ENCODE measurements at regions of chr22 and their contacts with region 1.

Region 1: GRCh38 chr22:38681784-38682335 is at the start of gene TOMM22:
- DNase-seq: peak; percentile 83
- H3K4me3 Mint-ChIP-seq: peak within 1 kb of the TSS; percentile 92
- H3K27ac Mint-ChIP-seq: peak within 1 kb of the TSS; percentile 99
- H3K4me1 Mint-ChIP-seq: peaks cover 5% of the 10 kb centered on the region
- H3K27me3 Mint-ChIP-seq: no peaks in the 10 kb centered on the region
- CTCF ChIP-seq: peak; percentile 39
- total RNA-seq, gene TOMM22: 60.4 and 71.5 TPM in 2 replicates

Region 2: DNA sequence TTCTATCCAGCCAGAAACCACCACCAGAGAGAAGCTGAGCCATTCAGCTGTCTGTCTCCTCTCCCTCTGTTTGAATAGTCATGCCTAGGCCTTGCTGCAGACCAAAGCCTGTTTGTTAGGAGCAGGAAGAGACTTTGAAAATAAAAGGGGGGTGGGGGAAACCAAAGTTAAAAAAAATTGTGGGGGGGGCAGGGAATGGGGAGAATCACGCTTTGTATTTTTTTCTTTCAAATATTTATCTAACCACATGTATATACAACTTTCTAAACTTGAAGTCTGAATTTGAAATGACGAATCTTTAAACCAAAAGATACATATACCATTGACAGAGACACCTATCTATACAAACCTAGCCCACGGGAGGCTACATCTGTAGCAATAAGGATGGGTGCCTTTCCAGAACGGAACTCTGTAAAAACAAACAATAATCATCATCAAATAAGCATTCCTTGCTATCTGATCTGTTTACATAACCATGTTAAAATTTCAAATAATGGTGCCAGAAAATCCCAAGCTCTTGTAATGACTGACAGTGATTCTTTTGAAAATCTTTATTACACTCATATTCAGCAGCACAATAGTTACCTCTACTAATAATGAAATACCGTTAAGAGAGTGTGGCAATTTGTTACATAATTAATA is 190.0 kb before region 1 on chr22:
- CTCF ChIA-PET with region 1: no interaction called
- POLR2A ChIA-PET with region 1: no interaction called
- intact Hi-C with region 1: no loop called
- DNase-seq: no peak
- H3K4me3 Mint-ChIP-seq: no peak overlapping the region
- H3K27ac Mint-ChIP-seq: no peak overlapping the region
- H3K4me1 Mint-ChIP-seq: peaks cover 5% of the 10 kb centered on the region
- H3K27me3 Mint-ChIP-seq: no peaks in the 10 kb centered on the region
- CTCF ChIP-seq: no peak

Region 3: GRCh38 chr22:38656256-38657044 is 25.4 kb before region 1 on chr22 and contains the starts of genes CBY1 and FAM227A:
- CTCF ChIA-PET with region 1: interaction called, 6 read pairs
- POLR2A ChIA-PET with region 1: interaction called, 38 read pairs
- intact Hi-C with region 1: no loop called
- DNase-seq: peak; percentile 89
- H3K4me3 Mint-ChIP-seq: peak within 1 kb of the TSS; percentile 93
- H3K27ac Mint-ChIP-seq: peak within 1 kb of the TSS; percentile 100
- H3K4me1 Mint-ChIP-seq: no peaks in the 10 kb centered on the region
- H3K27me3 Mint-ChIP-seq: no peaks in the 10 kb centered on the region
- CTCF ChIP-seq: no peak
- total RNA-seq, gene CBY1: 40.6 and 42.1 TPM in 2 replicates
- total RNA-seq, gene FAM227A: 2.3 and 2.6 TPM in 2 replicates

Region 4: DNA sequence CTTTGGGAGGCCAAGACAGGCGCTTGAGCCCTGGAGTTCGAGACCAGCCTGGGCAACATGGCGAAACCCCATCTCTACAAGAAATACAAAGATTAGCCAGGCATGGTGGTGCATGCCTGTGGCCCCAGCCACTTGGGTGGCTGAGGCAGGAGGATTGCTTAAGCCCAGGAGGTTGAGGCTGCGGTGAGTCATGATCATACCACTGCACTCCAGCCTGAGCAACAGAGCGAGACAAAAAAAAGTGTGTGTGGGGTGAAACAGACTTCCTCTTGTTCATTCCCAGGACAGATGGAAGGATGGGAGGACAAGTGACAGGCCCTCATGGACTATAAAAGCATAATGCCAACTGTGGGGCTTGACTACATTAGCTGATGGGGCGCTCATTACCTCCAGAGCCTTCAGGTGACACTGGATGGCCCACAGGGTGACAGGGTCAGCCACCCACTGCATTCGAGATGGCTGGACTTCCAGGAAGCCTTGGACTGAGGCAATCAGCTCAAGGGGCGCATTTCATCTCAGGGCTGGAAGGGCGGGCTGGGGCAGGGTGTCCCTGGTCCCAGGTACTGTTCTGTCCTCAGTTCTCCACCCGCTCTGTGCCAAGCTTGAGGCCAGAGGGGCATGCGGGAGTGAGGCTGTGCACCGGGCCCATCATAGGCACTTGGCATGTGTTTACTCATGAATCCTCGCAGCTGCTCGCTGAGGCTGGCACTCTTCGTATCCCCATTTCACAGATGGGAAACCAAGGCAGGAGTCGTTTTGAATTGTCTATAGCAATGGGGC is 149.5 kb after region 1 on chr22:
- CTCF ChIA-PET with region 1: no interaction called
- POLR2A ChIA-PET with region 1: no interaction called
- intact Hi-C with region 1: no loop called
- DNase-seq: peak; percentile 75
- H3K4me3 Mint-ChIP-seq: no peak overlapping the region
- H3K27ac Mint-ChIP-seq: no peak overlapping the region
- H3K4me1 Mint-ChIP-seq: peaks cover 4% of the 10 kb centered on the region
- H3K27me3 Mint-ChIP-seq: no peaks in the 10 kb centered on the region
- CTCF ChIP-seq: no peak